Gastrocnemius medialis (tissue), 4 donors: ENCODE measurements at regions of chr19 and their contacts with region 1.

Region 1: DNA sequence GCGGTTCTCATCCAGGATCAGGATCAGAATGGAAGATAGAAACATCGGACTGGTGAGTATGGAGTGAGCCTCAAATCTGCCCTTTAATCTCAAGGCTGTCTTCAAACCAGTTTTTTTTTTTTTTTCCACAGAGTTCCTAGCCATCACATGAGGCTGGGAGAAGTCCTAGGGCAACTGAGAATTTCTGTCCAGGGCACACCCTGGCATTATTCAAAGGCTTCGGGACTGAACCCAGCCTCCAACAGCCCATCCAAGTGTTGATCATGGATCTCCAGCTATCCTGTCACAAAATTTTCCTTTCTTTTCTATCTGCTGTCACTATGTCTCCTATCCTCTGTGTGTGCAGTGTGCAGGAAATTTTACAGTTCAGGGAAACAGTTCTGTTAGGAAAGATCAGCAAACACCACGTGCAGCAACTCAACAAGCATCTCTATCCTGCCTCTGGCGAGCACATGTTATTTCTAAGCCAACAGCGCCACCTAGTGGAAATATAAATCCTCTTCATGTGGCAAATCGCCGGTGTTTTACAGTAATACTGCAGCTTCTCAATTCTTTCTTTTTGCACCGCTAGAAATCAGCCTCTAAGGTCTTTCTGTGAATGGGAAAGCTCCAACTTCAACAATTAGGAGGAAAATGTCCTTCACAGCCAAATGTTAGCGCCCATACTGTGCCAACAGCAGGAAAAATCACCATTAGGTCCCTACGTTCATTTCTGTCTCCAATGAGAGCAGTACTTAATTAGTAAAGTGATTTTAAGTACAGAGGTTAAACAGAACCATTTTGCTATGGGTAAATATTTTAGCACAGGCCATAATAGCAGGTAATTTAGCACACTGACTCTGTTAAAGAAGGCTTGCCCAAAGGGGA is 21.4 kb upstream of the ZNF181 start:
- DNase-seq: peak; percentile 33 to 50
- ATAC-seq: peak; percentile 80 to 89
- H3K4me3 ChIP-seq: no peak overlapping the region
- H3K27ac ChIP-seq: no peak overlapping the region
- H3K4me1 ChIP-seq: no peaks in the 10 kb centered on the region
- H3K27me3 ChIP-seq: no peaks in the 10 kb centered on the region
- CTCF ChIP-seq: peak; percentile 79 to 88 (median 86)
- POLR2A ChIP-seq: no peak

Region 2: DNA sequence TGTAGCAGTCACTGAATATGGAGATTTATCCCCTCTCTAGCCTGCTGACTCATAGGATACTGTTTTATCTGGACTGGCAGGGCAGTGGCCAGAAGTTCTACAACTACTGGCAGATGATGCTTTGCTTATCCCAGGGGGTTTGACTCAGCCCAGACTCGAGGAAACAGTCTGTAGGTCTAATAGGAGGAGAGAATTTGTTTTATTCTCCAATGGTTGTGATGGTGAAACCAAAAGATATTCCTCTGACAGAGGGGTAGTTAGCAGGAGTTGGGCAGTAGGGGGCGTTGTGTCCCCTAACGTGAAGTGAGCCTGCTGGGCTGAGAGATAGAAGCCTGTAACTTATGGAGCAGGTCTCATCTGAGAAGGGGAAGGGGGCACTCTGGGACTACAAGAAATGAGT is 156.1 kb before region 1 on chr19:
- in situ Hi-C with region 1: no loop called
- intact Hi-C with region 1: loop called (anchors 2 kb)
- DNase-seq: no peak
- ATAC-seq: no peak
- H3K4me3 ChIP-seq: no peak overlapping the region
- H3K27ac ChIP-seq: no peak overlapping the region
- H3K4me1 ChIP-seq: no peaks in the 10 kb centered on the region
- H3K27me3 ChIP-seq: no peaks in the 10 kb centered on the region
- CTCF ChIP-seq: peak in 2 of 5 experiments; percentile 25 to 38
- POLR2A ChIP-seq: no peak

Region 3: GRCh38 chr19:34639491-34640085 is 73.0 kb before region 1 on chr19:
- in situ Hi-C with region 1: loop called in 3 of 4 experiments (anchors 5 kb)
- intact Hi-C with region 1: loop called (anchors 1 kb)
- DNase-seq: peak in 1 of 2 donors; percentile 35
- ATAC-seq: peak in 1 of 2 donors; percentile 75
- H3K4me3 ChIP-seq: no peak overlapping the region
- H3K27ac ChIP-seq: no peak overlapping the region
- H3K4me1 ChIP-seq: peaks cover 0 to under 1% of the 10 kb centered on the region in 2 donors
- H3K27me3 ChIP-seq: no peaks in the 10 kb centered on the region
- CTCF ChIP-seq: peak; percentile 59 to 80 (median 77)
- POLR2A ChIP-seq: no peak

Region 4: GRCh38 chr19:34649886-34650543 is 62.6 kb before region 1 on chr19:
- in situ Hi-C with region 1: loop called in 1 of 4 experiments (anchors 5 kb)
- intact Hi-C with region 1: no loop called
- DNase-seq: no peak
- ATAC-seq: no peak
- H3K4me3 ChIP-seq: no peak overlapping the region
- H3K27ac ChIP-seq: no peak overlapping the region
- H3K4me1 ChIP-seq: peaks cover 4 to 16% of the 10 kb centered on the region in 2 donors
- H3K27me3 ChIP-seq: no peaks in the 10 kb centered on the region
- CTCF ChIP-seq: no peak
- POLR2A ChIP-seq: no peak

Region 5: DNA sequence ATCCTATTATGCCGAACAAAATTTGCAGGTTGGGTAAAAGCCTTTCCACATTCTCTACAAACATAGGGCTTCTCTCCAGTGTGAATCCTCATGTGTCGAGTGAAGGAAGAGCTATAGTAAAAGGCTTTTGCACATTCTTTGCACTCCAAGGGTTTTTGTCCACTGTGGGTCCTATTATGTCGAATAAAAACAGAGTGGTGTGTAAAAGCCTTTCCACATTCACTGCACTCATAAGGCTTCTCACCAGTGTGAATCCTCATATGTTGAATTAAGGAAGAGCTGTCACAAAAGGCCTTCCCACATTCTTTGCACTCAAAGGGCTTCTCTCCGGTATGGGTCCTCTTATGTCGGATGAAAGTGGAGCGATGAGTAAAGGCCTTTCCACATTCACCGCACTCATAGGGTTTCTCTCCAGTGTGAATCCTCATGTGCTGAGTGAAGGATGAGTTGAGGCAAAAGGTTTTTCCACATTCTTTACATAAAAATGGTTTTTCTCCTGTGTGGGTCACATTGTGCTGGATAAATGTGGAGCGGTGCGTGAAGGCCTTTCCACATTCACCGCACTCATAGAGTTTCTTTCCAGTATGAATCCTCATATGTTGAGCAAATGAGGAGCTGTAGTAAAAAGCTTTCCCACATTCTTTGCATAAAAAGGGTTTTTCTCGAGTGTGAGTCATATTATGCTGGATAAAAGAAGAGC is 46.7 kb after region 1 on chr19:
- in situ Hi-C with region 1: no loop called
- intact Hi-C with region 1: no loop called
- DNase-seq: no peak
- ATAC-seq: no peak
- H3K4me3 ChIP-seq: peak overlapping the region in 1 of 4 donors; percentile 34
- H3K27ac ChIP-seq: no peak overlapping the region
- H3K4me1 ChIP-seq: no peaks in the 10 kb centered on the region
- H3K27me3 ChIP-seq: no peaks in the 10 kb centered on the region
- CTCF ChIP-seq: no peak
- POLR2A ChIP-seq: no peak